ENCODE measurements at regions of chr20 and their contacts with region 1.

Region 1: GRCh38 chr20:62065669-62066338 is at the start of gene TAF4:
- DNase-seq: peak; percentile 64 to 88
- H3K4me3 ChIP-seq: peak within 1 kb of the TSS; percentile 77 to 86
- H3K27ac ChIP-seq: peak within 1 kb of the TSS; percentile 89 to 95
- H3K4me1 ChIP-seq: peaks cover 7 to 40% (median 29%) of the 10 kb centered on the region in 4 donors
- H3K27me3 ChIP-seq: no peaks in the 10 kb centered on the region
- CTCF ChIP-seq: no peak

Region 2: GRCh38 chr20:62121776-62122631 is 56.2 kb after region 1 on chr20 and contains the start of gene LSM14B:
- intact Hi-C with region 1: loop called (anchors 5 kb)
- DNase-seq: peak; percentile 93 to 98
- H3K4me3 ChIP-seq: peak within 1 kb of the TSS; percentile 86 to 87
- H3K27ac ChIP-seq: peak within 1 kb of the TSS; percentile 90 to 95
- H3K4me1 ChIP-seq: peaks cover 0 to 39% (median 36%) of the 10 kb centered on the region in 4 donors
- H3K27me3 ChIP-seq: peaks cover 0 to 11% of the 10 kb centered on the region in 2 donors
- CTCF ChIP-seq: no peak

Region 3: DNA sequence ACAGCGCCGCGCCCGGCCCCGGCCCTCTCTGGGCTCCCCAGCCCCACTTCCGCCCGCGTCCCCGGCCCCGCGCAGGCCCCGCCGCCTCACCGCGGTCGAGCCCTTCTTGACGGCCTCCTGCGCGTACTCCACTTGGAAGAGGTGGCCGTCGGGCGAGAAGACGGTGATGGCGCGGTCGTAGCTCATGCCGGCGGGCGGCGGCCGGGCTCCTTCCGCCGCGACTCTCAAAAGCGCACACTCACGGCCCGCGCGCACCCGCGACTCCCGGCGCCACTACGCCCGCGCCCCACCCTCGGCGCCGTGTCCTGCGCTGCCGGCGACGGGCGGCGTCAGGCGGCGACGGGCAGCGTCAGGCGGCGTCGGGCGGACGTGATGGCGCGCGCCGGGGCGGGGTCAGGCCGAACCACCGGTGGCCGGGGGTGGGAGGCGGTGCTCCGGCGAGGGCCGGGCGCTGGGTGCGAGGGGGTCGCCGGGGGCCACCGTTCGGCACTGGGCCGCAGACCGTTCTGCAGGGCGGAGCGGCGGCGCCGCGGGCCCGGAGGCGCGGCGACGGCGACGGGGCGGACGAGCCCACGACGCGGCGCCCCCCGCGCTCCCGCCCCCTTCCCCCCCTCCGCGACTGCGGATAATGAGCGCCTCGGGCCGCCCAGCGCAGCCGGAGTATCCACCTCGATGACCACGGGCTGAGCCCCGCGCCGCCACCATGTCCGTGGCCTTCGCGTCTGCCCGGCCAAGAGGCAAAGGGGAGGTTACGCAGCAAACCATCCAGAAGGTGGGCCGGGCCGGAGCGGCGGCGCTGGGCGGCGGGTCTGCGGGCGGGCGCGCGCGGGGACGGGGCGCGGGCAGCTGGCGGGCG is 77.5 kb after region 1 on chr20 and contains the starts of genes PSMA7 and SS18L1:
- intact Hi-C with region 1: loop called (anchors 5 kb)
- DNase-seq: peak; percentile 80 to 91
- H3K4me3 ChIP-seq: peak within 1 kb of the TSS; percentile 68 to 72
- H3K27ac ChIP-seq: peak within 1 kb of the TSS; percentile 87 to 95
- H3K4me1 ChIP-seq: peaks cover 4 to 38% (median 32%) of the 10 kb centered on the region in 4 donors
- H3K27me3 ChIP-seq: no peaks in the 10 kb centered on the region
- CTCF ChIP-seq: no peak